Mammary epithelial cell (primary cell): ENCODE measurements at regions of chr1 and their contacts with region 1.

Region 1: DNA sequence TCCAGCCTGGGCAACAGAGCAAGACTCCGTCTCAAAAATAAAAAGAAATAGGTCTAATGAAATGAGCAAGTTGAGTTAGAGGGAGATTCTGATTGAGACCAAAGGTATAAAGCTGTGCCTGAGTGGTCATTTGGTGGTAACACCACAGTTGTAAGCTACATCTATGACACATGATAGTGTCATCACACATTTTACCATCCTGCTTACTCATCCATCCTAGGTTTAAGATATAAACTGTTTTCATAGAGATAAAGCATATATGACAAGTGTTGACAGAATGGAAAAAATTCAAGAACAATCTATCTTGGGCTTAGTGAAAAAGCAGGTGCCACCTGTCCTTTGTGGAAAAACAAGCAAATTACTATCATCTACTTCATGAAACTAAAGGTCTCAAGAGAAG is 7.1 kb upstream of the CFAP141 start:
- DNase-seq: peak; percentile 78
- H3K4me3 ChIP-seq: no peak overlapping the region
- H3K27ac ChIP-seq: peak overlapping the region; percentile 22
- H3K4me1 ChIP-seq: peaks cover 17% of the 10 kb centered on the region
- H3K27me3 ChIP-seq: no peaks in the 10 kb centered on the region
- CTCF ChIP-seq: no peak

Region 2: GRCh38 chr1:153849487-153850185 is 363.6 kb before region 1 on chr1:
- CTCF ChIA-PET with region 1: no interaction called
- dilution Hi-C with region 1: no loop called
- in situ Hi-C with region 1: no loop called
- intact Hi-C with region 1: no loop called
- DNase-seq: no peak
- H3K4me3 ChIP-seq: no peak overlapping the region
- H3K27ac ChIP-seq: no peak overlapping the region
- H3K4me1 ChIP-seq: no peaks in the 10 kb centered on the region
- H3K27me3 ChIP-seq: no peaks in the 10 kb centered on the region
- CTCF ChIP-seq: no peak

Region 3: DNA sequence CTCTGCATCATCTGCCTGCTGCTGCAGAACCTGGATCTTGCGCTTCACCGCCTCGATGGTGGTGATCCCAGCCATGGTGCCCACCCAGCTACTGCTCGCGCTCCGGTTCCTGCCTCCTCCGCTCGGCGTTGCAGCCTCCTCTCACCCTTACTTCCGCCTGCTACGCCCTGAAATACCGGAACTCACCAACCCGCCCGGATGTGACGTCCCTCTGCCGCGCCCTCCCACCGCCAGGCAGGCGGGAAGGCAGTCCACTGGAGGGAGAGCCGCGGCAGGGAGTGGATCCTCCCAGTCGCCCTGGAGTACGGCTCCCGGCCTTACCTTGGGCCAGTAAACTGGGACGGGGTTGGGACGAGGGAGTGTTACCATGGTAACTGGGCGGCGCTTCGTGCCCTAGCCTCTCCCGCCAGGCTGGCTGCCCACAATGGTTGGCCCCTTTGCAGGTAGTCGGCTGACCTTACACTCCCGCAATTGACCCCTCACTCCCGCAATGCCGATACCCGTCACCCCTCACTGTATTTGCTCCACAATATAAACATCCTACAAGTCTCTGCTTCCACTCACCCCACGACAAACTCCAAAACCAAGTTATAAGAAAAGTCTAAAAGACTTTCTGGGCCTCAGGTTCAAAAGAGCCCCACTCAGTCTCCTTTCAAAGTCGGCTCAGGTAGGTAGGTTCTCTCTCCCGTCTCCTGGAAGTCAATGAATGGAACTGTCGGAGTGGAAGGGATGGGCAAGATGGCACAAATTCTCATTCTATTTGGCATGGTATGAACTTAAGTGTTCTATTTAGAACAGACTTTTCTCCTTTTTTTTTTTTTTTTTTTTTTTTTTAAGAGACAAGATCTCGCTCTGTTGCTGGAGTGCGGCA is 30.0 kb before region 1 on chr1:
- CTCF ChIA-PET with region 1: no interaction called
- dilution Hi-C with region 1: no loop called
- in situ Hi-C with region 1: no loop called
- intact Hi-C with region 1: loop called (anchors 1 kb)
- DNase-seq: peak; percentile 99
- H3K4me3 ChIP-seq: peak overlapping the region; percentile 85 to 96 (median 91)
- H3K27ac ChIP-seq: peak overlapping the region; percentile 94
- H3K4me1 ChIP-seq: peaks cover 34% of the 10 kb centered on the region
- H3K27me3 ChIP-seq: no peaks in the 10 kb centered on the region
- CTCF ChIP-seq: peak in 1 of 2 donors; percentile 10